Mammary epithelial cell (primary cell): ENCODE measurements at regions of chr9 and their contacts with region 1.

Region 1: GRCh38 chr9:6277417-6277816 is 50.8 kb upstream of the TPD52L3 start:
- DNase-seq: no peak
- H3K4me3 ChIP-seq: no peak overlapping the region
- H3K27ac ChIP-seq: no peak overlapping the region
- H3K4me1 ChIP-seq: peaks cover 2% of the 10 kb centered on the region
- H3K27me3 ChIP-seq: no peaks in the 10 kb centered on the region
- CTCF ChIP-seq: no peak

Region 2: GRCh38 chr9:6226696-6227095 is 50.7 kb before region 1 on chr9:
- CTCF ChIA-PET with region 1: no interaction called
- dilution Hi-C with region 1: no loop called
- in situ Hi-C with region 1: loop called in 1 of 2 experiments (anchors 10 kb)
- intact Hi-C with region 1: no loop called
- DNase-seq: peak; percentile 82
- H3K4me3 ChIP-seq: no peak overlapping the region
- H3K27ac ChIP-seq: no peak overlapping the region
- H3K4me1 ChIP-seq: peaks cover 29% of the 10 kb centered on the region
- H3K27me3 ChIP-seq: peaks cover 7% of the 10 kb centered on the region
- CTCF ChIP-seq: no peak

Region 3: DNA sequence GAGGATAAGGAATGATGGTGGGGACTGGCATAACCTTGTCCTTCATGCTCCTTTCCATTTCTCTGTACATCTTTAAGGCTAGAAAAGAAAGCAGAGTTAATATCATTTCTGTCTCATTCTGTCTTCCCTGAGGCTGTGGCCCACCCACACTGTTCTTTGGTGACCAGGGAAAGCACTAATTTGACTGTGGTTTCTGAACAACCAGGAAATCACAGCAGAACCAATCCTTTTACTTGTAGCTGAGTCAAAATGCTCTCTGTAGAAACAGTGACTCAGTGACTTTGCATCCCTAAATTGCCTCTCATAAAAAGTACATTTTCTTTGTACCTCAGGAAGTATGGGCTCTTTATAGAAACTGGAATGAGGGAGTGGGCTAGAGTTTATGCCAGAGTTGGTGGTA is 33.7 kb before region 1 on chr9:
- CTCF ChIA-PET with region 1: no interaction called
- dilution Hi-C with region 1: no loop called
- in situ Hi-C with region 1: no loop called
- intact Hi-C with region 1: no loop called
- DNase-seq: peak; percentile 84
- H3K4me3 ChIP-seq: no peak overlapping the region
- H3K27ac ChIP-seq: peak overlapping the region; percentile 6
- H3K4me1 ChIP-seq: peaks cover 30% of the 10 kb centered on the region
- H3K27me3 ChIP-seq: no peaks in the 10 kb centered on the region
- CTCF ChIP-seq: no peak

Region 4: DNA sequence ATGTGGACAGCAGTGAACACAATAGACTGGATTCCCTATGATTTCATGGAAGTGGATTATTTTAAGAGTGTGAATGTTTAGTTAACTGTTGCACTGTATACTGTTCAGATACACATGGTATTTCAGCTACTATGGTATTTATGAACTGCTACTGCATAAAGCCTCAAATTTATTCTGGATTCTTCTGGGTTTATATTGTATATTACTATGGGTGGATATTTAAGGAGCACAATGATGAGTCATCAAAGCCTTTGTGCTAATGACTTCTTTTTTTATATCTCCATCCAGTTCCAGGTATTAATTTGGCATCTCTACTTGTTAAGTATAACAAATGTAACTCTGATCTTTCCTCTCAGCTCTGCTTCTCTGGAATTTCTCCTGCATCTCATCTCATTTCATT is 487.1 kb after region 1 on chr9:
- CTCF ChIA-PET with region 1: no interaction called
- dilution Hi-C with region 1: no loop called
- in situ Hi-C with region 1: no loop called
- intact Hi-C with region 1: no loop called
- DNase-seq: no peak
- H3K4me3 ChIP-seq: no peak overlapping the region
- H3K27ac ChIP-seq: no peak overlapping the region
- H3K4me1 ChIP-seq: peaks cover 8% of the 10 kb centered on the region
- H3K27me3 ChIP-seq: no peaks in the 10 kb centered on the region
- CTCF ChIP-seq: no peak